T-cell (primary cell): ENCODE measurements at regions of chr10 and their contacts with region 1.

Region 1: GRCh38 chr10:354901-355617 is 219.8 kb downstream of the ZMYND11 start:
- DNase-seq: no peak
- ATAC-seq: no peak
- H3K4me3 ChIP-seq: no peak overlapping the region
- H3K4me3 Mint-ChIP-seq: no peak overlapping the region
- H3K27ac ChIP-seq: no peak overlapping the region
- H3K27ac Mint-ChIP-seq: no peak overlapping the region
- H3K4me1 ChIP-seq: peaks cover 10 to 16% of the 10 kb centered on the region in 2 experiments
- H3K4me1 Mint-ChIP-seq: peaks cover 18 to 20% (median 19%) of the 10 kb centered on the region in 3 donors
- H3K27me3 ChIP-seq: no peaks in the 10 kb centered on the region
- H3K27me3 Mint-ChIP-seq: no peaks in the 10 kb centered on the region

Region 2: DNA sequence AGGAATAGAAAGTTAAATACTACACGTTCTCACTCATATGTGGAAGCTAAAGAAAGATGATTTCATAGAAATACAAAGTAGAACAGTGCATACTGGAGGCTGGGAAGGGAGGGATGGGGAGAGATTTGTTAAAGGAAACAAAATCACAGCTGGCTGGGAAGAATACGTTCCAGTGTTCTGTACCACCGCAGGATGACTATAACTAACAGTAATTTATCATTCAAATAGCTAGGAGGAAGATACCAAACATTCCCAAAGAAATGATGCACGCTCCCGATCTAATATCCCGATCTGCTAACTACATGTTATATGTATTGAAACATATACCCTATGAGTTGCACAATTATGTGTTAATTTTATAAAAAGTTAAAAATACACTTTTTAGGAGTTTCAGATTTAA is 57.5 kb before region 1 on chr10:
- CTCF ChIA-PET with region 1: interaction called in 1 of 2 experiments, 10 read pairs
- POLR2A ChIA-PET with region 1: no interaction called
- DNase-seq: no peak
- ATAC-seq: no peak
- H3K4me3 ChIP-seq: no peak overlapping the region
- H3K4me3 Mint-ChIP-seq: no peak overlapping the region
- H3K27ac ChIP-seq: no peak overlapping the region
- H3K27ac Mint-ChIP-seq: no peak overlapping the region
- H3K4me1 ChIP-seq: no peaks in the 10 kb centered on the region
- H3K4me1 Mint-ChIP-seq: peaks cover 2 to 9% (median 5%) of the 10 kb centered on the region in 3 donors
- H3K27me3 ChIP-seq: no peaks in the 10 kb centered on the region
- H3K27me3 Mint-ChIP-seq: peaks cover 0 to 3% of the 10 kb centered on the region in 2 donors